PC-9 (cell line): ENCODE measurements at regions of chr9 and their contacts with region 1.

Region 1: DNA sequence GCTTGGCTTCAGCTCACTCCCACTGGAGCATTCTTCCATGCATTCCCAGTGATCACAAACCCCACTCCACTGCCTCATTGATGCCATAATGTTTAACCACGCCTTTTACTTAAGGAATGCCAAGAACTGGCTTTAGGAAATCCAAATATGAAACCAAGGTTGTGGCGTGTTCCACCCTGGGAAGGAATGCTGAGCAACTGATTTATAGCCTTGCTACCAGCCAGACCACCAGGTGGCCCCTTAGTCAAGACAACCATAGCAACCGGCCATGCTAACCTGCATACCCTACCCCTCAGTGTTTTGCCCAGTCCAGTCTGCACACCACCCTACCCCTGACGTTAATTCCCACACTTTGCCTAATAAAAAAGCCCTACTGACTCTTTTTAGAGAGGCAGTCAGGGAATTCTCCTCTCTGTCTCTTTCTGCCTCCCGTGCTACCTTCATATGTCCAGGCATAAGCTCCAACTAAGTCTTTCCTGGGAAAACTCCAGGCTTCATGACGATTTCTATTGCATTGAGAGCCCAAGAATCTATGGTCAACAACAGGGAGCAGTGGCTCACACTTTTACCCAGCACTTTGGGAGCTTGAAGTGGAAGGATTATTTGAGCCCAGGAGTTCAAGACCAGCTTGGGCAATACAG is 27.0 kb upstream of the PRRC2B start:
- DNase-seq: peak; percentile 64 to 72
- H3K4me3 ChIP-seq: no peak overlapping the region
- H3K27ac ChIP-seq: no peak overlapping the region
- H3K4me1 ChIP-seq: peaks cover 19% of the 10 kb centered on the region
- H3K27me3 ChIP-seq: no peaks in the 10 kb centered on the region
- CTCF ChIP-seq: no peak; the same call in 1 of the 2 replicates

Region 2: DNA sequence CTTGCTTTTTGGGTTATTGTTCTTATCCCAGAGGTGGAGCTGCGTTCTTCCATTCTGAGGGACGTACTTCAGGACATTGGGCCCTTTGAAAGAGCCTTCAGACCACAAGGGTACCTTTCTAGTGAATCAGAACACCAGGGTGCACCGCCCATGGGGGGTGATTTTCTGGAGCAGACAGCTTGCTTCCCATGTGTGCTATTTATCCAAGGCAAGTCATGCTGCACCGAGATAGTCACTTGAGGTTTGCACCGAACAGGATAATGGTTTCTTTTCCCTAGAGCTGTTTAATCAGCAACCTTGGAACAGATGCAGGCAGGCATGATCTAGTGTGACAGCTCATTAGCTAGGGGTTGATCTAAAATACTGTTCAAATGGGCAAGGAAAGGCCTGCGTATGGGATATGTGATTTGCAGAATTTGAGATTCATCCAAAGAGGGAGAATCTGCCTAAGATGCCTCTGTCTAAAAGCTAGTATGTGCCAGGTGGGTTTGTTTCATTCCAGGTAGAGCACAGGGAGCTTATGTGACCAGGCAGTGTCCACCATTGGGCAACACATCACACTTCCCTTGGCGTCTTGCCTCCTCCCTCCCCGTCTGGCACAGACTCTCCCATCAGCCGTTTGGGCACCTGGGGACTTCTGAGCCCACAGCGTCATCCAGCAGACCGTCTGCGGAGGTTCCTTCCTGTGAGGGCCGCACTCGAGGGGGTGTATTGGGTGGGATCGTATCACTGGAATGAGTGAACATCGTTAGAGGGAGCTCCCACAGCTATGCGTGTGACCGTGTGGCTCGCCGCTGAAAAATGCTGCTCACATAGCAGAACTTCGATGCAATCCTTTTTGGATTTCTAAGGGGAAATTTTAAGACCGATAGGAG is 508.8 kb before region 1 on chr9:
- CTCF ChIA-PET with region 1: interaction called, 11 read pairs
- POLR2A ChIA-PET with region 1: no interaction called
- intact Hi-C with region 1: no loop called
- DNase-seq: no peak
- H3K4me3 ChIP-seq: no peak overlapping the region
- H3K27ac ChIP-seq: no peak overlapping the region
- H3K4me1 ChIP-seq: no peaks in the 10 kb centered on the region
- H3K27me3 ChIP-seq: no peaks in the 10 kb centered on the region
- CTCF ChIP-seq: no peak

Region 3: DNA sequence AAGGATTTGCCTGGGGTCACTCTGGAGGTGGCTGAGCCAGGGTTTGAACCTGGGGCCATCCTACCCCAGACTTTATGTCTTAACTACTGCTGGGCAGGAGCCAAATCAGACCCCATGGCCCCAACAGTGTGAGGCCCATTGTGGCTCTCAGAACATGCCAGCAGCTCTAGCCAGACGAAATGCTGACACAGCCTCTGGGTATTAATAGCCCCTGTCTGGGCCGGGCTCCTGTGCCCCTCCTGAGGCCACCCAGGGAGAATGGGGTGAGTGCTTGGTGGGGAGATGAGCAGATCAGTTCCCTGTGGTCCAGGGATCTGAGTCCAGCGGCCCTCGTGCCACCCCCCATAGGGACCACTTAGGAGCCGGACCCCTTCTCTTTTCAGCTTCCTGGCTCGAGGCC is 79.5 kb before region 1 on chr9:
- CTCF ChIA-PET with region 1: interaction called, 11 read pairs
- POLR2A ChIA-PET with region 1: no interaction called
- intact Hi-C with region 1: no loop called
- DNase-seq: no peak
- H3K4me3 ChIP-seq: no peak overlapping the region
- H3K27ac ChIP-seq: no peak overlapping the region
- H3K4me1 ChIP-seq: no peaks in the 10 kb centered on the region
- H3K27me3 ChIP-seq: peaks cover 6% of the 10 kb centered on the region
- CTCF ChIP-seq: no peak